Lower leg skin (tissue), 4 donors: ENCODE measurements at regions of chr15 and their contacts with region 1.

Region 1: DNA sequence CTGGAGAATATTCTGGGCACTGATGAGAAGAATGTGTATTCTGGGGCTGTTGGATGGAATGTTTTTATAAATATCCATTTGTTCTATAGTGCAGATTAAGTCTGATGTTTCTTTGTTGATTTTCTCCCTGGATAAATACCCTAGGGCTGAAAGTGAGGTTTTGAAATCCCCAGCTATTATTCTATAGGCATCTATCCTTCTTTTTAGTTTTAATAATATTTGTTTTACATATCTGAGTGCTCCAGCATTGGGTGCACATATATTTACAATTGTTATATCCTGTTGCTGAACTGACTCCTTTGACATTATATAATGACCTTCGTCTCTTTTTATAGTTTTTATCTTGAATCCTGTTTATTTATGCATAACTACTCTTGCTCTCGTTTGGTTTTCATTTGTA is 42.9 kb downstream of the GALK2 start:
- DNase-seq: no peak
- H3K4me3 ChIP-seq: no peak overlapping the region
- CTCF ChIP-seq: no peak
- POLR2A ChIP-seq: no peak

Region 2: DNA sequence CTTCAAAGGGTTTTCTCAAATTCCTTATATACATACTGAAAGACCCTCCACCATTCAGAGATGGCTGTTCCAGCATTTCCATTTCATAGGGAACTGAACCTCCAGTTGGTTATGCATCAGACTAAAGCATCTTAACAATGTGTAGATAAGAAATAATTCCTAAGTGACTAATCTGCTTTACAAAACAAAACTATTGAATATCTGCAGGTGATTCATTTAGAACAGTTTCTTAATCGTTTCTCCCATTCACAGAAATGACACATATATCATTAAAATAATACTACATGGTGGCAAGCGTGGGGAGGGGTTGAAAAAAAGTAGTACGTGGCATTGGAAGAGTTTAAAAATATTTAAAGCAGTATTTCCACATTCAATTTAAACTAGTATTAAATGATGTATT is 77.0 kb before region 1 on chr15:
- intact Hi-C with region 1: no loop called
- DNase-seq: no peak
- H3K4me3 ChIP-seq: no peak overlapping the region
- CTCF ChIP-seq: no peak
- POLR2A ChIP-seq: no peak

Region 3: GRCh38 chr15:49190586-49190985 is 22.3 kb before region 1 on chr15:
- intact Hi-C with region 1: no loop called
- DNase-seq: no peak
- H3K4me3 ChIP-seq: no peak overlapping the region
- CTCF ChIP-seq: no peak
- POLR2A ChIP-seq: no peak

Region 4: GRCh38 chr15:50735156-50735555 is 1522.2 kb after region 1 on chr15:
- intact Hi-C with region 1: loop called (anchors 5 kb)
- DNase-seq: no peak
- H3K4me3 ChIP-seq: no peak overlapping the region
- CTCF ChIP-seq: no peak
- POLR2A ChIP-seq: no peak